ENCODE measurements at regions of chr1 and their contacts with region 1.

Region 1: GRCh38 chr1:83555871-83556270 is 443.1 kb downstream of the TTLL7 start:
- DNase-seq: no peak
- ATAC-seq: no peak
- H3K4me3 ChIP-seq: no peak overlapping the region
- H3K27ac ChIP-seq: no peak overlapping the region
- H3K4me1 ChIP-seq: no peaks in the 10 kb centered on the region
- H3K27me3 ChIP-seq: no peaks in the 10 kb centered on the region
- CTCF ChIP-seq: no peak
- POLR2A ChIP-seq: no peak
- RAD21 ChIP-seq: no peak

Region 2: GRCh38 chr1:83516369-83516768 is 39.5 kb before region 1 on chr1:
- CTCF ChIA-PET with region 1: no interaction called
- POLR2A ChIA-PET with region 1: no interaction called
- dilution Hi-C with region 1: no loop called
- in situ Hi-C with region 1: no loop called
- intact Hi-C with region 1: loop called (anchors 1 kb)
- DNase-seq: no peak
- ATAC-seq: no peak
- H3K4me3 ChIP-seq: no peak overlapping the region
- H3K27ac ChIP-seq: no peak overlapping the region
- H3K4me1 ChIP-seq: no peaks in the 10 kb centered on the region
- H3K27me3 ChIP-seq: no peaks in the 10 kb centered on the region
- CTCF ChIP-seq: no peak
- POLR2A ChIP-seq: no peak
- RAD21 ChIP-seq: no peak

Measured in IMR-90 (cell line).